ENCODE measurements at regions of chr3 and their contacts with region 1.

Region 1: DNA sequence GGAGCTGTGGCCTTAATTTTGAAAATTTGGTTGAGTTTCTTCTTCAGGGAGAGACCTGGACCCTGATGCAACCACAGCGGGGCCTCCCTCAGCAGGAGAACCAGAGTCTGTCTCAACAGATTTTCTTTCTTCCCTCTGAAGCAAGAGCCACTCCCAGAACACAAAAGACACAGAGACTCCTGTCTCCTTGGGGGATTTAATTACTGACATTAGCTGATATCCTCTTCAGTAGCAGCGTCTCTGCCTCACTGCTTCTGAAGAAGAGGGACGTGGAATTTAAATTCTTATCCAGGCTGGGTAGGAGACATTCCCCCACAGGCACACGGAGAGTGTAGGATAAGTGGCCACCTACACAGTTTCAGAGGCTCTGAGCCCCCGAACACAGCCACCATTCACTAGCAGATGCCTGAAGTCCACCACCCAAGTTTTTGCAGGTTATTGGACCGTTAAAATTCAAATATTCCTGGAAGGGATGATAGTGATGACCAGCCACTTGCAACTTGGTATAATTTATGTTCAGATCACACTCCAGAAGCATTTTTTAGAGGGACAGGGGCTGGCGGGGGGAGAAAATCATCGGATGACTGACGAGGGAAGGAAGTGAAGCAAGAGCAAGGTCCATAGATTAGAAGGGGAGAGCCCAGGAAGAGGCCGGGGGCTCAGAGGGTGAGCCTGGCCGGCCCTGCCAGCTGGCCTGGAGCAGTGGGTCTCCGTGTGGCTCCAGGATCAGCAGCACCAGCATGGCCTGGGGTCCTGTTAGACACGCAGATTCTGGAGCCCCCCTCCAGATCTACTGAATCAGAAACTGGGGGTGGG is 109.7 kb downstream of the BDH1 start:
- DNase-seq: no peak
- ATAC-seq: no peak
- H3K4me3 Mint-ChIP-seq: no peak overlapping the region
- H3K27ac Mint-ChIP-seq: peak overlapping the region; percentile 17
- H3K4me1 Mint-ChIP-seq: peaks cover 24% of the 10 kb centered on the region
- H3K27me3 Mint-ChIP-seq: peaks cover 4% of the 10 kb centered on the region
- CTCF ChIP-seq: no peak

Region 2: DNA sequence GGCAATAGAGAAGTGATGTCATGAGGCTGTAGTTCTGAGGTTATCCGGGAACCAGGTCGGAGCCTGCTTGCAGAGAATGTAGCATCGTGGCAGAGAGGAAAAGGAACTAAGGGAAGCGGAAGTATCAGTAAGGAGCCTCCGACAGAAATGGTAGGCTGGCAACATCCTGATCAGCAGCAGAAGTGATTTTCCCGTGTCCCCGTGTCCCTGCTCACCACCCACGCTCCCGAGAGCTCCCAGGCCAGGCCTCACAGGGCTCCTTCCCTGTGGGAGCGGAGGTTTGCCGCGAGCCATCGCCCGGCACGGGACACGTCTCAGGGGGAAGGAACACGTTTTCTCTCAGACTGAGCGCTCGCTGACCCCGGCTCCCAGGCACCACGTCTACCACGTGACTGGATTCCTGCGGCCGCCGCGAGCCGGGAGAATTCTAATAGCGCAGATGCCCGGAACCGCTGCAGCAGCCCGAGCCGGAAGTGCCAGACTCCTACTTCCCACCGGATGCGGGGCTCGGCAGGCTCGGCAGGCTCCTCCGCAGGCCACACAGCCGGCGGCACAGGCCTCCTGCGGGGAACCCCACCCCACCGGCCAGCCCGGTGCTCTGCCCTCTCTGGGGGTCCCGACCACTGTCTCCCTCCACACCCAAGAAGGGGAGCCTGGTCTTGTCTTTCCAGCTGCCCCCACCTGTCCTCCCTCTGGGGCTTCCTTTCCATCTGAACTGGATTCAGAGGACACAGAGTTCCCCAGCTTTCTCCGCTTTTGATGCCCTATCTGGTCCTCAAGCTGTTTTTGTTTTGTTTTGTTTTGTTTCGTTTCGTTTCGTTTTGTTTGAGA is 10.4 kb after region 1 on chr3:
- CTCF ChIA-PET with region 1: interaction called, 11 read pairs
- POLR2A ChIA-PET with region 1: interaction called, 4 read pairs
- intact Hi-C with region 1: no loop called
- DNase-seq: peak; percentile 68
- ATAC-seq: peak; percentile 63
- H3K4me3 Mint-ChIP-seq: peak overlapping the region; percentile 79
- H3K27ac Mint-ChIP-seq: peak overlapping the region; percentile 91
- H3K4me1 Mint-ChIP-seq: peaks cover 14% of the 10 kb centered on the region
- H3K27me3 Mint-ChIP-seq: peaks cover 6% of the 10 kb centered on the region
- CTCF ChIP-seq: no peak